ENCODE measurements at regions of chr2 and their contacts with region 1.

Region 1: GRCh38 chr2:66851449-66851872 is 416.5 kb downstream of the MEIS1 start:
- DNase-seq: peak; percentile 81
- H3K4me3 ChIP-seq: no peak overlapping the region
- H3K27ac ChIP-seq: peak overlapping the region in 3 of 4 donors; percentile 87 to 91 (median 89)
- H3K4me1 ChIP-seq: peaks cover 0 to 64% (median 58%) of the 10 kb centered on the region in 4 donors
- H3K27me3 ChIP-seq: no peaks in the 10 kb centered on the region
- CTCF ChIP-seq: no peak
- EP300 ChIP-seq: peak in 1 of 4 donors; percentile 50
- POLR2A ChIP-seq: no peak

Region 2: DNA sequence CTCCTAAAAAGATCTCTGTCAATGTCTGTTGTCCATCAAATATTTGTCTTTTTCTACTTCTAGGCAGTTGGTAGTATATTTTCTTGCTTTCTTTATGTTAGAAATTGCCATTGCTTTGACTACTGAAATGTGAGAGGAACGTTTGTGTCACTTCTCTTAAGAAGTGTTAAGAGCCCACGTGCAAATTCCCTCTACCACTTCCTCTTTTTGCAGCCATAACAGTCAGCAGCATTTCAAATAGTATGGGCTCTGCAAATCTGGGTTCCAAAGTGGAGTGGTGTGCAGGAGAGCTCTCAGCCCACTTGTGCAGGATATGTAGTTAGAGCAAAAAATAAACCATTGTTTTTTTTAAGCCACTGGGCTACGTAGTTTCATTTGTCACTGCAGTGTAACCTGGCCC is 102.5 kb before region 1 on chr2:
- intact Hi-C with region 1: loop called (anchors 5 kb)
- DNase-seq: no peak
- H3K4me3 ChIP-seq: no peak overlapping the region
- H3K27ac ChIP-seq: peak overlapping the region in 3 of 4 donors; percentile 62 to 80 (median 69)
- H3K4me1 ChIP-seq: peaks cover 0 to 56% (median 27%) of the 10 kb centered on the region in 4 donors
- H3K27me3 ChIP-seq: no peaks in the 10 kb centered on the region
- CTCF ChIP-seq: no peak
- EP300 ChIP-seq: no peak
- POLR2A ChIP-seq: no peak

Region 3: DNA sequence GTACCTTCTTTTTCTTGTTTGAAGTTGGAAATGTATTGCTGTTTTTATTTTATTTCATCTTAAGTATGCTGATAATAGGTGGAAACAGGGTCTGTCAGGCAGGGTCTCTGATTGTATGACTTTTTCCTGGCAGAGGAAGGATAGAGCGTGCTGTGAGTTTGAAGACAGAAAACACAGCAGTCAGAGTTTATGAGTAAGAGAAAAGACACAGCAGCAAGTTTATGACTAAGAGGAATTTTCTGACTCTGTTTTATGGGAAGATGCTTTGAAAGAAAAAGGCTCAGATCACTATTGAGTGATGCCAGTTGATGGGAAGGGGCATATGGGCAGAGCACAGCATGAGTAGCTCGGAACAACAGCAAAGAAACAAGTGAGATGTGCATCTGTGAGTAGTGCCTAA is 37.5 kb before region 1 on chr2:
- intact Hi-C with region 1: loop called (anchors 5 kb)
- DNase-seq: no peak
- H3K4me3 ChIP-seq: no peak overlapping the region
- H3K27ac ChIP-seq: peak overlapping the region; percentile 7 to 85 (median 80)
- H3K4me1 ChIP-seq: peaks cover 0 to 42% (median 13%) of the 10 kb centered on the region in 4 donors
- H3K27me3 ChIP-seq: no peaks in the 10 kb centered on the region
- CTCF ChIP-seq: no peak
- EP300 ChIP-seq: peak in 1 of 4 donors; percentile 22
- POLR2A ChIP-seq: no peak

Region 4: GRCh38 chr2:66962625-66963207 is 111.3 kb after region 1 on chr2:
- intact Hi-C with region 1: loop called (anchors 5 kb)
- DNase-seq: peak; percentile 94
- H3K4me3 ChIP-seq: no peak overlapping the region
- H3K27ac ChIP-seq: peak overlapping the region; percentile 44 to 87 (median 82)
- H3K4me1 ChIP-seq: peaks cover 0 to 51% (median 26%) of the 10 kb centered on the region in 4 donors
- H3K27me3 ChIP-seq: no peaks in the 10 kb centered on the region
- CTCF ChIP-seq: no peak
- EP300 ChIP-seq: peak; percentile 58 to 93 (median 78)
- POLR2A ChIP-seq: no peak

Region 5: GRCh38 chr2:67259581-67260342 is 408.3 kb after region 1 on chr2:
- intact Hi-C with region 1: loop called (anchors 5 kb)
- DNase-seq: peak; percentile 94
- H3K4me3 ChIP-seq: no peak overlapping the region
- H3K27ac ChIP-seq: peak overlapping the region; percentile 84 to 89 (median 86)
- H3K4me1 ChIP-seq: peaks cover 0 to 28% (median 19%) of the 10 kb centered on the region in 4 donors
- H3K27me3 ChIP-seq: no peaks in the 10 kb centered on the region
- CTCF ChIP-seq: no peak
- EP300 ChIP-seq: peak; percentile 51 to 86 (median 62)
- POLR2A ChIP-seq: no peak

Measured in sigmoid colon (tissue), 7 donors.